Transverse colon (tissue), 4 donors: ENCODE measurements at regions of chr5 and their contacts with region 1.

Region 1: GRCh38 chr5:139335811-139336210 is 5.8 kb upstream of the PAIP2 start:
- DNase-seq: no peak
- H3K4me3 ChIP-seq: no peak overlapping the region
- H3K27ac ChIP-seq: no peak overlapping the region
- H3K4me1 ChIP-seq: peaks cover under 1 to 3% (median under 1%) of the 10 kb centered on the region in 4 donors
- H3K27me3 ChIP-seq: no peaks in the 10 kb centered on the region
- CTCF ChIP-seq: no peak
- EP300 ChIP-seq: no peak
- POLR2A ChIP-seq: no peak

Region 2: GRCh38 chr5:139078345-139078744 is 257.5 kb before region 1 on chr5:
- in situ Hi-C with region 1: no loop called
- intact Hi-C with region 1: no loop called
- DNase-seq: no peak
- H3K4me3 ChIP-seq: no peak overlapping the region
- H3K27ac ChIP-seq: no peak overlapping the region
- H3K4me1 ChIP-seq: peaks cover 0 to 19% (median 2%) of the 10 kb centered on the region in 4 donors
- H3K27me3 ChIP-seq: no peaks in the 10 kb centered on the region
- CTCF ChIP-seq: no peak
- EP300 ChIP-seq: no peak
- POLR2A ChIP-seq: no peak

Region 3: DNA sequence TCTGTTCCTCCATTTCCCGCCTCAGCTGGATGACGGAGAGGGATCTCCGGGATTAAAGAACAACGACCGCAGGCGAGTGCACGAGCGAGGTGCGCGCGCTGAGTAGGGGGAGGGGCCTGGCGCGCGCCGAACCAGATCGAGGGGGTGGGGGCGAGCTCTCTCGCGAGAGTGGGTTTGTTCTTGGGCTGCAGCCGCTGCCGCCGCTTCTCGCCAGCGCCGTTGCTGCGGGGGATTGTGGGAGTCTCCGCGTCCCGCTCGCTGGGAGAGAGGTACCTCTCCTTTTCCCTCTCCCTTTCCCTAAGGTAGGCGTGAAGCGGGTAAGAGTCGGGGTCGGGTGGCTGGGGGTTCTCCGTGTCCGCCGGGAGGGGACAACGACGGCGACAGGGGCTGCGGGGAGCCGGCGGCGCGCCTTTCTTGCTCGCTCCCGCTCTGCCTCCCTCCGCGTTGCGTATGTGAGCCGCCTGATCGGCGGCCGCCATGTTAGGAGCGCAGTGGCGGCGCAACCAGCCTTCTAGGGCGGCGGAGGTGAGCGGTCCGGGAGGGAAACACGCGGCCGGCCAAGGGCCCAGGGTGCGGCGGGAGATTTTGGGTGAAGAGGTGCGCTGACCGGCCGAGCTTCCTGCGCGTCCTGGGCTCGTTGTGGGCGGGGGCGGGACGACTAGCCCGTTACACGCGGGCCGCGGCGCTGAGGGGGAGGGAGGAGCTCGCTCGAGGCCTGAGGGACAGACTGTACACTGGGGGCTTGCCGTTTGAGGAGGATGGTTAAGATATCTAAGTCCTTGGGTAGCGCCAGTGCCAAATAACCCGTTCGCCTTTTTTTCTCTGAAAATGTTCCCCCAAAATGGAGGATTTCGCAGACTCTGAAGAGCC is 42.1 kb before region 1 on chr5 and contains the start of gene MATR3:
- in situ Hi-C with region 1: no loop called
- intact Hi-C with region 1: loop called (anchors 5 kb)
- DNase-seq: peak; percentile 97
- H3K4me3 ChIP-seq: peak within 1 kb of the TSS; percentile 75 to 91 (median 84)
- H3K27ac ChIP-seq: peak within 1 kb of the TSS; percentile 96 to 100 (median 99)
- H3K4me1 ChIP-seq: peaks cover 28 to 43% (median 41%) of the 10 kb centered on the region in 4 donors
- H3K27me3 ChIP-seq: no peaks in the 10 kb centered on the region
- CTCF ChIP-seq: no peak
- EP300 ChIP-seq: no peak
- POLR2A ChIP-seq: peak; percentile 99
- total RNA-seq, gene MATR3: 97.3 to 190 (median 134) TPM